Naive thymus-derived CD4-positive, alpha-beta T cell (primary cell): ENCODE measurements at regions of chr7 and their contacts with region 1.

Region 1: GRCh38 chr7:155298834-155299534 is 1.3 kb downstream of the INSIG1 start:
- DNase-seq: peak; percentile 86 to 98 (median 98)
- ATAC-seq: peak; percentile 81
- H3K4me3 ChIP-seq: peak overlapping the region; percentile 73
- H3K4me3 Mint-ChIP-seq: peak overlapping the region; percentile 88 to 97 (median 93)
- H3K27ac ChIP-seq: peak overlapping the region; percentile 78
- H3K27ac Mint-ChIP-seq: peak overlapping the region; percentile 91 to 99 (median 97)
- H3K4me1 ChIP-seq: peaks cover 22 to 37% of the 10 kb centered on the region in 2 donors
- H3K4me1 Mint-ChIP-seq: peaks cover 23 to 62% (median 42%) of the 10 kb centered on the region in 7 donors
- H3K27me3 ChIP-seq: no peaks in the 10 kb centered on the region
- H3K27me3 Mint-ChIP-seq: peaks cover 0 to 3% (median 0%) of the 10 kb centered on the region in 5 donors

Region 2: DNA sequence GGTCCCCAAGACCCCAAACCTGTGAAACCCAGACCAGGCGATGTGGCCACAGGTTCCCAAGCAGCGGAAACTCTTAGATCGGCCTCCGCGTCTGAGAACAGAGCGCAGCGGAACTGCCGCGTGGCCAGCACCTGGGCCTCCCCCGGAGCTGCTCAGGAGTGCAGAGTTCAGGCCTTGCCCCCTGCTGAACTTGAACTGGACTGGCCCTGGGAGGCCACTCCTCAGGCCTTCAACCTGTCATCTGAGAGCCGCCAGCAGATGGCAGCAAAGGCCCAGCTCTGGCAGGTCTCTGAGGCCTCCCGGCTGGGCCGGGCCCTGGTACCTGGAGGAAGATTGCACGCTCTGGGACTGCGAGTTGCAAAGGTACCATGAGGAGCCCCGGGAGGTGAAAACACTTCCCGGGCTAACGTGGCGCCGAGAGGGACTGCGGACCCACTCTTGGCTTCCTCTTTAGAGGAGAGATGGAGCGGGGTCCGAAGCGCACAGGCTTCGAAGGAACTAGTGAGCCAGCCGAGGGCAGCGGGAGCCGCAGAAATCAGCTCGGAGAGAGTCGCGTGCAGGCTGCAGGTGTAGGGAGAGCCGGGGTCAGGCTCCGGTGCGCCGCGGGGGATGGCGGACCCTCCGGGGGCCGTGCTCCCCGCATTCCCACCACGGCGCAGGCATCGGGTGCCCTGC is 385.2 kb before region 1 on chr7:
- CTCF ChIA-PET with region 1: no interaction called
- POLR2A ChIA-PET with region 1: no interaction called
- intact Hi-C with region 1: loop called (anchors 1 to 5 kb)
- DNase-seq: peak; percentile 71 to 89 (median 82)
- ATAC-seq: peak; percentile 96
- H3K4me3 ChIP-seq: peak overlapping the region; percentile 56
- H3K4me3 Mint-ChIP-seq: peak overlapping the region; percentile 76 to 95 (median 90)
- H3K27ac ChIP-seq: no peak overlapping the region
- H3K27ac Mint-ChIP-seq: peak overlapping the region in 8 of 9 donors; percentile 17 to 85 (median 66)
- H3K4me1 ChIP-seq: no peaks in the 10 kb centered on the region
- H3K4me1 Mint-ChIP-seq: peaks cover 3 to 7% (median 4%) of the 10 kb centered on the region in 7 donors
- H3K27me3 ChIP-seq: no peaks in the 10 kb centered on the region
- H3K27me3 Mint-ChIP-seq: peaks cover 4 to 25% (median 14%) of the 10 kb centered on the region in 5 donors

Region 3: DNA sequence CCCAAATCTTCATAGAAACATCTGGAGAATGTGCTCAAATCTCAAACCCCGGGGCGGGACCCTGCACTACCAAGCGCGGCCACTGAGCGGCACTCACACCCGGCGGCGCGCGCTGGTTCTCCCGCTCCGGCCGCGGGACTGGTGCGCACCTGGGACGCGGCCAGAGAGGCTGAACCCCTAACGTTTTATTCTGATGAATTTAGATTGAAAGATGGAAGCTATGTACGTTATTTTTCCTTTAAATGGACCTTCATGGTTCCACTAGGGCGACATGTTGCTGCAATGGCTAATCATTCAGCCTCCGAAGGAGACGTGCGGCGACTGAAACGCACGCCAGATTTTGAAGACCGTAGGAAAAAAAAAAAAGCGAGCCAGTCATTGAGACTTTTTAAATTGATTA is 108.3 kb before region 1 on chr7:
- CTCF ChIA-PET with region 1: interaction called, 3 read pairs
- POLR2A ChIA-PET with region 1: no interaction called
- intact Hi-C with region 1: loop called (anchors 1 kb)
- DNase-seq: peak in 7 of 9 donors; percentile 28 to 76 (median 48)
- ATAC-seq: peak; percentile 83
- H3K4me3 ChIP-seq: no peak overlapping the region
- H3K4me3 Mint-ChIP-seq: peak overlapping the region in 4 of 10 donors; percentile 32 to 59 (median 48)
- H3K27ac ChIP-seq: no peak overlapping the region
- H3K27ac Mint-ChIP-seq: no peak overlapping the region
- H3K4me1 ChIP-seq: no peaks in the 10 kb centered on the region
- H3K4me1 Mint-ChIP-seq: peaks cover 0 to 17% (median 3%) of the 10 kb centered on the region in 7 donors
- H3K27me3 ChIP-seq: no peaks in the 10 kb centered on the region
- H3K27me3 Mint-ChIP-seq: peaks cover 2 to 17% (median 8%) of the 10 kb centered on the region in 5 donors

Region 4: DNA sequence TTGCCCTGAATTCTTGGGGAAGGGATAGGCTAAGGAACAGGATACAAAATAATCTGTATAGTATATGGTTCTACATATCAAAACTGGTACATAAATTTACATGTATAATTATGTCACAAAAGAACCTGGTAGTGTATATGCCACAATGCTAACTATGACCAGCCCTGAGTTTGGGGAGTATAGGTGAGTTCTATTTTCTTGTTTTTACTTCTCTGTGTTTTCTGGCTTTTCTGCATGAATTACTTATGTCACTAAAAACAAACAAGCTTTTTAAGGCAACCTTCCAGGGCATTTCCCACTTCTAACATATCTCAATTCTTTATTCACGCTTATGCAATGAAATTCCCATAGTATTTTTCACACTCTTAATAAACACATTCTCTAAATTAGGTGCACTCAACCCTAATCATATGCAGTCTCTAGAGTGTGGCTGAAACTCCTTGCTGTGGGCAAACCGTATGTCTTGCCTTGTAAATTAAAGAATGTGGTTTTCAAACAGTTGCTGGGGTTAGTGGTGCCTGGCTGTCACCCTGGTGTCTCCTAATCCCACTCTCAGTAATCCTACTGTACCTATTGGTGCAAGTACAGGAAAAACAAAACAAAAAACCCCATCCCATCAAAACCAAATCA is 15.3 kb before region 1 on chr7:
- CTCF ChIA-PET with region 1: interaction called, 3 read pairs
- POLR2A ChIA-PET with region 1: interaction called, 50 read pairs
- intact Hi-C with region 1: loop called in 1 of 2 experiments (anchors 1 kb)
- DNase-seq: no peak
- ATAC-seq: no peak
- H3K4me3 ChIP-seq: no peak overlapping the region
- H3K4me3 Mint-ChIP-seq: peak overlapping the region in 1 of 10 donors; percentile 10
- H3K27ac ChIP-seq: no peak overlapping the region
- H3K27ac Mint-ChIP-seq: no peak overlapping the region
- H3K4me1 ChIP-seq: peaks cover 0 to 18% of the 10 kb centered on the region in 2 donors
- H3K4me1 Mint-ChIP-seq: peaks cover 12 to 68% (median 39%) of the 10 kb centered on the region in 7 donors
- H3K27me3 ChIP-seq: no peaks in the 10 kb centered on the region
- H3K27me3 Mint-ChIP-seq: peaks cover 0 to 5% (median 3%) of the 10 kb centered on the region in 5 donors

Region 5: DNA sequence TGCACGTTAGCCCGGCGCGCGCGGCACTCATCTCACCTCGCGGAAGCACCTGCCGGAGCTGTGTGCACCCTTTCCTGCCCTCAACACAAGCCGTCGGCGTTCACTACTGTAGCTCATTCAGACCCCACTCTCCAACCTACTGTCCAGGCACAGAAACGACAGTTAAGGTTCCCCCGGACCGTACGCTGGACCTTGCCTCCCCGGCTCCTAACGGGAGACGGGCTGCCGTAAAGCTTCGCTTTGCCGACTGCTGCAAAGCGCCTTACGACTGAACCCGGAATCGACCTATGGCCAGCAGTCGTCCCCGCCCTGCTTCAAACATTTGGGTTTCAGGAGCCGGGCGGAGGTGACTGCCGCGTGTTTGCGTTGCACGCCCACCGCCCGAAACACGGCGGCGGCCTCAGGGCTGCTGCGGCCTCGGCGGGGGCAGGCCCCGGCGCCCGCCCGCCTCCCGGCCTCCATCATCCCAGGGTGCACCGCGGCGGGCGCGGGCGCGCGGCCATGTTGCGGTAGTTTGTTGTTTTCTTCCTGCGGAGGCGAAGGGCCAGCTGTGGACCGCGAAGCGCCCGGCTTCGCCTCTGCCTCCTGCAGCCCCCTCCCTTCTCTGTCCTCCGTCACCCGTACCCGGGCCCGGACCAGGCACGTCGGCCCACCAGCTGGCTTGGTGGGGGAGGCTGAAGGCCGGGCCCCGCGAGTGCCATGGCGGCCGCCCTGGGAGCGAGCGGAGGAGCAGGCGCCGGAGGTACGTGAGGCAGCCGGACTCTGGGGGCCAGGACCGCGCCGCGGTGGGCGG is 345.4 kb after region 1 on chr7 and contains the start of gene RBM33:
- CTCF ChIA-PET with region 1: no interaction called
- POLR2A ChIA-PET with region 1: interaction called, 3 read pairs
- intact Hi-C with region 1: loop called (anchors 1 kb)
- DNase-seq: peak; percentile 74 to 91 (median 84)
- ATAC-seq: peak; percentile 90
- H3K4me3 ChIP-seq: peak within 1 kb of the TSS; percentile 99
- H3K4me3 Mint-ChIP-seq: peak within 1 kb of the TSS; percentile 94 to 100 (median 99)
- H3K27ac ChIP-seq: peak within 1 kb of the TSS; percentile 98
- H3K27ac Mint-ChIP-seq: peak within 1 kb of the TSS; percentile 94 to 100 (median 99)
- H3K4me1 ChIP-seq: peaks cover 22 to 27% of the 10 kb centered on the region in 2 donors
- H3K4me1 Mint-ChIP-seq: peaks cover 30 to 58% (median 49%) of the 10 kb centered on the region in 7 donors
- H3K27me3 ChIP-seq: no peaks in the 10 kb centered on the region
- H3K27me3 Mint-ChIP-seq: peaks cover 0 to 2% (median 0%) of the 10 kb centered on the region in 5 donors
- total RNA-seq, gene RBM33: 90.2 to 177 (median 164) TPM

Region 6: GRCh38 chr7:156640257-156640948 is 1341.4 kb after region 1 on chr7 and contains the start of gene RNF32:
- CTCF ChIA-PET with region 1: no interaction called
- POLR2A ChIA-PET with region 1: no interaction called
- intact Hi-C with region 1: loop called in 1 of 2 experiments (anchors 2 kb)
- DNase-seq: peak; percentile 72 to 100 (median 81)
- ATAC-seq: peak; percentile 88
- H3K4me3 ChIP-seq: peak within 1 kb of the TSS; percentile 77
- H3K4me3 Mint-ChIP-seq: peak within 1 kb of the TSS; percentile 78 to 98 (median 87)
- H3K27ac ChIP-seq: peak within 1 kb of the TSS; percentile 67
- H3K27ac Mint-ChIP-seq: peak within 1 kb of the TSS in 8 of 9 donors; percentile 50 to 100 (median 84)
- H3K4me1 ChIP-seq: peaks cover 6% of the 10 kb centered on the region in 2 donors
- H3K4me1 Mint-ChIP-seq: peaks cover 7 to 48% (median 17%) of the 10 kb centered on the region in 7 donors
- H3K27me3 ChIP-seq: no peaks in the 10 kb centered on the region
- H3K27me3 Mint-ChIP-seq: peaks cover 12 to 65% (median 42%) of the 10 kb centered on the region in 5 donors
- total RNA-seq, gene RNF32: 0.81 to 2.1 (median 0.99) TPM in 4 of 5 experiments, not detected in the other